Gastrocnemius medialis (tissue), 4 donors: ENCODE measurements at regions of chr10 and their contacts with region 1.

Region 1: GRCh38 chr10:29811751-29812449 is 177.1 kb upstream of the SVIL start:
- DNase-seq: peak; percentile 72 to 89
- ATAC-seq: peak; percentile 88 to 94
- H3K4me3 ChIP-seq: peak overlapping the region in 2 of 4 donors; percentile 1 to 20
- H3K27ac ChIP-seq: peak overlapping the region; percentile 90 to 92 (median 90)
- H3K4me1 ChIP-seq: peaks cover 43 to 52% of the 10 kb centered on the region in 2 donors
- H3K27me3 ChIP-seq: no peaks in the 10 kb centered on the region
- CTCF ChIP-seq: peak in 1 of 5 experiments; percentile 5
- POLR2A ChIP-seq: no peak

Region 2: GRCh38 chr10:29646238-29646902 is 165.5 kb before region 1 on chr10:
- in situ Hi-C with region 1: no loop called
- intact Hi-C with region 1: loop called (anchors 5 kb)
- DNase-seq: peak; percentile 83 to 88
- ATAC-seq: peak; percentile 45 to 52
- H3K4me3 ChIP-seq: peak overlapping the region in 3 of 4 donors; percentile 21 to 40 (median 22)
- H3K27ac ChIP-seq: peak overlapping the region; percentile 95 to 96 (median 96)
- H3K4me1 ChIP-seq: peaks cover 61 to 69% of the 10 kb centered on the region in 2 donors
- H3K27me3 ChIP-seq: no peaks in the 10 kb centered on the region
- CTCF ChIP-seq: no peak
- POLR2A ChIP-seq: peak in 1 of 2 donors; percentile 47

Region 3: GRCh38 chr10:29746080-29746797 is 65.7 kb before region 1 on chr10:
- in situ Hi-C with region 1: no loop called
- intact Hi-C with region 1: loop called (anchors 2 kb)
- DNase-seq: no peak
- ATAC-seq: peak; percentile 64 to 77
- H3K4me3 ChIP-seq: no peak overlapping the region
- H3K27ac ChIP-seq: peak overlapping the region; percentile 63 to 76 (median 72)
- H3K4me1 ChIP-seq: peaks cover 10% of the 10 kb centered on the region in 2 donors
- H3K27me3 ChIP-seq: no peaks in the 10 kb centered on the region
- CTCF ChIP-seq: no peak
- POLR2A ChIP-seq: no peak

Region 4: GRCh38 chr10:29857843-29858701 is 46.2 kb after region 1 on chr10:
- in situ Hi-C with region 1: no loop called
- intact Hi-C with region 1: loop called (anchors 1 kb)
- DNase-seq: peak; percentile 77 to 89
- ATAC-seq: peak; percentile 70 to 84
- H3K4me3 ChIP-seq: peak overlapping the region in 2 of 4 donors; percentile 5 to 37
- H3K27ac ChIP-seq: peak overlapping the region; percentile 78 to 85 (median 84)
- H3K4me1 ChIP-seq: peaks cover 47 to 49% of the 10 kb centered on the region in 2 donors
- H3K27me3 ChIP-seq: no peaks in the 10 kb centered on the region
- CTCF ChIP-seq: peak; percentile 75 to 85 (median 77)
- POLR2A ChIP-seq: peak in 1 of 2 donors; percentile 41

Region 5: GRCh38 chr10:29897999-29898716 is 86.3 kb after region 1 on chr10:
- in situ Hi-C with region 1: no loop called
- intact Hi-C with region 1: no loop called
- DNase-seq: no peak
- ATAC-seq: no peak
- H3K4me3 ChIP-seq: no peak overlapping the region
- H3K27ac ChIP-seq: no peak overlapping the region
- H3K4me1 ChIP-seq: peaks cover 0 to 5% of the 10 kb centered on the region in 2 donors
- H3K27me3 ChIP-seq: no peaks in the 10 kb centered on the region
- CTCF ChIP-seq: no peak
- POLR2A ChIP-seq: no peak

Region 6: DNA sequence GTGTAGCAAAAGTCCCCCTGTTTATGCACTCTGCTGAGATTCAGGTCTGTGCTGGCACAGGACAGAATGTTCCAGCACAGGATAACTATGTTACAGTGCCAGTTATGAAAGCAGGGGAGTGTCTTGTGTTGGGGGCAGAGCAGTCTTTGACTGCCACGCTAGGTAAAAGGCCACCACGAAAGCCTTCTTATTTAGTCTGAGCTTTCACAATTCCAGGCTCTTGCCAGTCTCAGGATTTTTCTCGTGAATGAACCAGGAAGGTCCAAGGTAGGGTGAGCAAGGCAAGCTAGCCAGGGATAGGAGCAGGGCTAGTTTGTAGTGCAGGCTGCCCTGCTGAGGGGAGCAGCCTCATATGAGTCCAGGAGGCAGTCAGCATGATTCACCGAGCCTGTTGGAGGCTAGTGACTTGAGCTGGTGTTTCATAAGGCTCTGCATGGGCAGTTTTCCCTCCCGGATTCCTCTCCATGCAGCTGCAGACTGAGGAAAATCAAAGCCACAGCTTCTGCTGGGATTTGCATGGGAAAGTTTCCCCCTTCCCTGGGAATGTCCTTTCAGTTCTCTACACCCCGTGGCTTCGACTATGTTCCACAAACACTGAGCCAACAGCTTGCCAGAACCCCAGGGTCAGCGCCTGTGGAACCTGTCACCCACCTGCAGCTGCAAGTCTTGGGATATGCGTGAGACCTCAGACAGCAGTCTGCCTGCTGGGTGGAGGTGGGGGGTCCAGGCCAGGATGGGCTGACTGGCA is 135.2 kb after region 1 on chr10:
- in situ Hi-C with region 1: no loop called
- intact Hi-C with region 1: loop called (anchors 5 kb)
- DNase-seq: peak; percentile 84 to 93
- ATAC-seq: peak; percentile 84 to 87
- H3K4me3 ChIP-seq: peak overlapping the region; percentile 14 to 39 (median 24)
- H3K27ac ChIP-seq: peak overlapping the region; percentile 91 to 99 (median 96)
- H3K4me1 ChIP-seq: peaks cover 32 to 36% of the 10 kb centered on the region in 2 donors
- H3K27me3 ChIP-seq: no peaks in the 10 kb centered on the region
- CTCF ChIP-seq: no peak
- POLR2A ChIP-seq: peak; percentile 25 to 60

Region 7: GRCh38 chr10:29969255-29970011 is 157.5 kb after region 1 on chr10:
- in situ Hi-C with region 1: no loop called
- intact Hi-C with region 1: loop called (anchors 2 kb)
- DNase-seq: peak; percentile 86 to 93
- ATAC-seq: peak; percentile 96
- H3K4me3 ChIP-seq: no peak overlapping the region
- H3K27ac ChIP-seq: peak overlapping the region; percentile 81 to 86 (median 82)
- H3K4me1 ChIP-seq: peaks cover 16 to 17% of the 10 kb centered on the region in 2 donors
- H3K27me3 ChIP-seq: no peaks in the 10 kb centered on the region
- CTCF ChIP-seq: no peak
- POLR2A ChIP-seq: peak; percentile 32 to 67